ENCODE measurements at regions of chr7 and their contacts with region 1.

Region 1: GRCh38 chr7:36863901-36864701 is 139.8 kb upstream of the AOAH start:
- DNase-seq: no peak
- ATAC-seq: no peak
- H3K4me3 ChIP-seq: no peak overlapping the region
- H3K27ac ChIP-seq: no peak overlapping the region
- H3K4me1 ChIP-seq: no peaks in the 10 kb centered on the region
- H3K27me3 ChIP-seq: no peaks in the 10 kb centered on the region
- CTCF ChIP-seq: no peak
- POLR2A ChIP-seq: no peak
- RAD21 ChIP-seq: no peak

Region 2: DNA sequence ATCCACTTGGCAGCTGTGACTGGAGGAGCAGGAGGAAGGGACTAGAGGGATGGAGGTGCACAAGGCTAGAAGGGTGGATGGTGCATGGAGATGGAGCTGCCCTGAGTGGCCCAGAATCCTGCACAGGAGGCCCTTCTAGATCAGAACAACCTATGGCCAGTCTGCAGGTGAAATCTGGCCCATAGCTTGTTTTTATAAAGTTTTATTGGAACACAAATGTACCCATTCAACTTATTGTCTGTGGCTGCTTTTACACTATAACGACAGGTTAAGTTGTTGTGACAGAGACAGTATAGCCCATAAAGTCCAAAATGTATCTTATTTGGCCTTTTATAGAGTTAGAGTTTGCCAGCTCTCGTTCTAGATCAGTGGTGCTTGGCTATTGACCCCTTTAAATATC is 613.8 kb before region 1 on chr7:
- CTCF ChIA-PET with region 1: no interaction called
- POLR2A ChIA-PET with region 1: no interaction called
- dilution Hi-C with region 1: no loop called
- in situ Hi-C with region 1: no loop called
- intact Hi-C with region 1: no loop called
- DNase-seq: no peak
- ATAC-seq: no peak
- H3K4me3 ChIP-seq: no peak overlapping the region
- H3K27ac ChIP-seq: no peak overlapping the region
- H3K4me1 ChIP-seq: no peaks in the 10 kb centered on the region
- H3K27me3 ChIP-seq: no peaks in the 10 kb centered on the region
- CTCF ChIP-seq: no peak
- POLR2A ChIP-seq: no peak
- RAD21 ChIP-seq: no peak

Region 3: GRCh38 chr7:36686499-36686898 is 177.6 kb before region 1 on chr7:
- CTCF ChIA-PET with region 1: no interaction called
- POLR2A ChIA-PET with region 1: no interaction called
- dilution Hi-C with region 1: no loop called
- in situ Hi-C with region 1: no loop called
- intact Hi-C with region 1: loop called (anchors 5 kb)
- DNase-seq: peak; percentile 41
- ATAC-seq: no peak
- H3K4me3 ChIP-seq: no peak overlapping the region
- H3K27ac ChIP-seq: no peak overlapping the region
- H3K4me1 ChIP-seq: no peaks in the 10 kb centered on the region
- H3K27me3 ChIP-seq: peaks cover 2% of the 10 kb centered on the region; the same call in 1 of the 2 replicates
- CTCF ChIP-seq: no peak
- POLR2A ChIP-seq: no peak
- RAD21 ChIP-seq: no peak

Region 4: DNA sequence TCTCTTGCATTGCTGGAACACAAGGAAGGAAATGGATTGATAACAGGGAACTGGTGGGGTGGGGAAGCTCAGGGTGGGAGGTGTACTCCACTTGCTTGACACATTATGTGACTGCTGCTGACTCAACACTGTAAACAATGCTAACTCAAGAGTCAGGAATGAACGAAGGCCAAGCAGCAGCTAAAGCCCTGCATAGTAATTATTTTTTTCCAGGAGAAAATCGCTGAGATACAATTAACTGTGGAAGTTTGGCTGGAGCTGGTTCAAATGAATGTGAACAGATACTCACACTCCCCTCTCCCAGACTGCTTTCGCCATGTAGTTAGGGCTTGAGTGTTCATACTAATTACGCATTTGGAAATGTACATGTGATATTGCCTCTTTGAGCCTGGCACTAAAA is 31.1 kb after region 1 on chr7:
- CTCF ChIA-PET with region 1: no interaction called
- POLR2A ChIA-PET with region 1: no interaction called
- dilution Hi-C with region 1: no loop called
- in situ Hi-C with region 1: no loop called
- intact Hi-C with region 1: no loop called
- DNase-seq: no peak
- ATAC-seq: no peak
- H3K4me3 ChIP-seq: no peak overlapping the region
- H3K27ac ChIP-seq: no peak overlapping the region
- H3K4me1 ChIP-seq: no peaks in the 10 kb centered on the region
- H3K27me3 ChIP-seq: no peaks in the 10 kb centered on the region
- CTCF ChIP-seq: no peak
- POLR2A ChIP-seq: no peak
- RAD21 ChIP-seq: no peak